Aorta (tissue), 5 donors: ENCODE measurements at regions of chr18 and their contacts with region 1.

Region 1: DNA sequence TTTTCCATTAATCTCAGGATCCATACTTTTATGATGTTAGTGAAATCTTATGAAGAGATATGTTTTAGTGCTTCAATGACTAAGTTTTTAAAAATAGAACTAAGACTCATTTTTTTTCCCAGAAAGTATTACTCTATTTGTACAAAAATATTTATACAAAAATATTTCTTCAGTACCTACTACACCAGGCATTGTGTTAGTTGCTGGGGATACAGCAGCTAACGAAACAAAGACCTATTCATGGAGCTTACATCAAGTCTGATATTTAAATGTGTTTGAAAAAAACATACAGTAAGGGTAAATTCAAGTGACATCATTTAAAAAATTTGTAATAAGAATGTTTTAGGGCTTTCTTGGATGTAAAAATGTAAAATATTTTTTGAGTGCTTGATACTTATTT is 11.6 kb downstream of the VAPA start:
- DNase-seq: no peak
- ATAC-seq: peak; percentile 79
- H3K4me3 ChIP-seq: no peak overlapping the region
- H3K27ac ChIP-seq: no peak overlapping the region
- H3K4me1 ChIP-seq: peaks cover 3 to 9% of the 10 kb centered on the region in 2 donors
- H3K27me3 ChIP-seq: no peaks in the 10 kb centered on the region

Region 2: DNA sequence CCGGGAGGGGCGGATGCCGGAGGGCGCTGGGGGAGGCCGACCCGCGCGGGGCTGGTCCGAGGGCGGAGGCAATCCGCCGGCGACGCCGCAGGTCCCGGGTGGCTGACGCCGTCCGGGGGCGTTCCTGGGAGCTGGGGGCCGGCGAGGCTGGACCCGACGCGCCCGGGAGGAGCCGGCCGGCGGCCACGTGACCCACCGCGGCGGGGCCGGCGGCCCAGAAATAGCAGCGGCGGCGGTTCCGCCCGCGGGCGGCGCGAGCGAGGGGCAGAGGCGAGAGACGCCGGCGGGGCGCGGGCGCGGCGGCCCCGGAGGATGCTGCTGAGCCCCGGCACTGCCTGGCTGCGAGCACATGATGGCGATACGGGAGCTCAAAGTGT is 217.3 kb before region 1 on chr18 and contains the start of gene RAB31:
- intact Hi-C with region 1: loop called in 1 of 2 experiments (anchors 10 kb)
- DNase-seq: peak; percentile 93 to 96
- ATAC-seq: peak; percentile 94
- H3K4me3 ChIP-seq: peak within 1 kb of the TSS; percentile 80 to 94
- H3K27ac ChIP-seq: peak within 1 kb of the TSS; percentile 74 to 92
- H3K4me1 ChIP-seq: peaks cover 0 to 3% of the 10 kb centered on the region in 2 donors
- H3K27me3 ChIP-seq: no peaks in the 10 kb centered on the region
- total RNA-seq, gene RAB31: 107 to 145 TPM